ENCODE measurements at regions of chr22 and their contacts with region 1.

Region 1: GRCh38 chr22:33519071-33519973 is 401.0 kb downstream of the LARGE1 start:
- DNase-seq: peak; percentile 74
- CTCF ChIP-seq: peak; percentile 53

Region 2: GRCh38 chr22:33529424-33530113 is 10.2 kb after region 1 on chr22:
- CTCF ChIA-PET with region 1: interaction called, 82 read pairs
- POLR2A ChIA-PET with region 1: no interaction called
- DNase-seq: no peak
- CTCF ChIP-seq: no peak

Region 3: GRCh38 chr22:33563220-33563964 is 44.1 kb after region 1 on chr22:
- CTCF ChIA-PET with region 1: interaction called, 16 read pairs
- POLR2A ChIA-PET with region 1: no interaction called
- DNase-seq: no peak
- CTCF ChIP-seq: no peak

Region 4: DNA sequence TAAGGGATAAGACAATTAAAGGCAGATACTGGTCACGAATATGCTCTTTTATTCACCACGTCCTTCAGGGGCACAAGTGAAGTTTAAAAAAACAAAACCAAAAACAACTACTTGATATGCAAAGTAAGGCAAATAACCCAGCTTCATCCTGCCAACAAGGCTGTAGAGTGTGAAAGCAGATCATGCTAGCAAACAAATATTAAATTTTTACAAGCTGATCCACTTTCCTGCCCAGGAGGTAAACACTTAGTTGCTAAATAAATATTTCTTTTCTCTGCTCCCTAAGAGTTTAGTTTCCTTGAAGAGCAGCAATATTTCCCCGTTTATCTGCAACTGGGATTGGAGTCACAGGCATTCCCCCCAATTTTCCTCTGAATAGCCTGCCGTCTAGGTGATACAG is 100.8 kb after region 1 on chr22:
- CTCF ChIA-PET with region 1: interaction called, 10 read pairs
- POLR2A ChIA-PET with region 1: no interaction called
- DNase-seq: no peak
- CTCF ChIP-seq: no peak